ENCODE measurements at regions of chr4 and their contacts with region 1.

Region 1: DNA sequence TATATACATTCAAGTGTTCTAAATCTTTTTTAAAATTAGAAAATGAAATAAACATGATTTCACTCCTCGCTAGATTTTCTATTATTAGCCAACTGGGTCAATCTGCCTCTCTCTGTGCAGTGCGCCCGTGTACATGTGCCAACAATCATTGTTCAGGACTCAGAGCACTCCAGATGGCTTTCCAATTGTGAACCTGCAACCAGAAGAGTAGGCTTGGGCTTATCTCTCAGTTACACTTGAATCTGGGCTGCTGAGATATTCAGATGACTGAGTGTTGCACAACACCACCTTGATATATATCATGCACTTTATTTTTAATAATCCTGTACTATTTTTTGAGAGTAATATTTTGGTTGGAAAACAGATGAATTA is 184.0 kb upstream of the FSTL5 start:
- DNase-seq: no peak
- ATAC-seq: peak; percentile 97

Region 2: GRCh38 chr4:162442128-162442527 is 94.3 kb after region 1 on chr4:
- intact Hi-C with region 1: loop called (anchors 10 kb)
- DNase-seq: no peak
- ATAC-seq: no peak

Region 3: GRCh38 chr4:162461952-162462351 is 114.1 kb after region 1 on chr4:
- intact Hi-C with region 1: no loop called
- DNase-seq: no peak
- ATAC-seq: no peak

Measured in Right ventricle myocardium inferior (tissue), 1 donor.